ENCODE measurements at regions of chr20 and their contacts with region 1.

Region 1: DNA sequence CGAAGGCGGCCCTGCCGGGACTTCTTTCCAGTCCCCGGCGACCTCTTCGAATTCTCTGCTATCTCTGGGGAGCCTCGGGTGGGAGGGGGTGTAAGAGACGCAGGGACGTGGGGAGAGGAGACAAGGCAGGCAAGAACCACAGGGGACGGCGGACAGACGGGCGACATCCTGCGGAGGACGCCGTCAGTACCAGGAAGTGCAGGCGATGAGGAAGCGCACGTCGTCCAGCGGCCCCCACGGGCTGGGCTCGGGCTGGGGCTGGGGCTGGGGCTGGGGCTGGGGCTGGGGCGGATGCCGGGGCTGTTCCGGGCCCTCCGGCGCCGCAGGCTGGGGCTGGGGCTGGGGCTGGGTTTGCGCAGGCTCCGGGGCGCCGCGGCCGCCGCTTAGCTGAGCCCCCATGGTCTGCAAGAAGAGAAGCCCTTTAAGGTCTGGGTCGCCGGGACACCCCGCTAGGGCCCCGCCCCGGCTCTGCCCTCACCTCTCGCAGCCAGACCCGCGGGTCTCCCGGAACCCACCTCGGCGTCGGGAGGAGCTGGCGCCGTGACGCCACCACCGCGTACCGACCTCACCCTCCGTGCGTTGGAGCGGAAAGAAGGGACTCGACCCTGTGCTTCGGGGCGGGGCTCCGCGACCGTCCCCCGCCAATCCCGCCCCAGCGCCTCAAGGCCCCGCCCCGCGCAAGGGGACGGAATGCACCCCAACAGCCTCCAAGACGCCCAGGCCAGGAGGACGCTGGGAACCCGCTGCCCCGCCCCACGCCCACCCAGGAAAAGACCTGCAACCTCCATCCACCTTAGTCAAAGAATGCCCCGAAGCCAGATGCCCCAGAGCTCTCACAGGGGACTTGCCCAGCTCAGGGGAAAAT is at the start of gene MMP24OS:
- DNase-seq: peak; percentile 94
- ATAC-seq: peak; percentile 96
- H3K4me3 Mint-ChIP-seq: peak within 1 kb of the TSS; percentile 99
- H3K27ac Mint-ChIP-seq: peak within 1 kb of the TSS; percentile 97
- H3K4me1 Mint-ChIP-seq: peaks cover 9% of the 10 kb centered on the region
- H3K27me3 Mint-ChIP-seq: no peaks in the 10 kb centered on the region
- total RNA-seq, gene MMP24OS: 44.6 to 56.8 TPM

Region 2: GRCh38 chr20:34825530-34826362 is 452.0 kb before region 1 on chr20 and contains the start of gene NCOA6:
- CTCF ChIA-PET with region 1: interaction called, 3 read pairs
- POLR2A ChIA-PET with region 1: no interaction called
- intact Hi-C with region 1: loop called in 1 of 2 experiments (anchors 1 kb)
- DNase-seq: peak; percentile 95
- ATAC-seq: peak; percentile 67
- H3K4me3 Mint-ChIP-seq: peak within 1 kb of the TSS; percentile 86
- H3K27ac Mint-ChIP-seq: peak within 1 kb of the TSS; percentile 95
- H3K4me1 Mint-ChIP-seq: peaks cover 30% of the 10 kb centered on the region
- H3K27me3 Mint-ChIP-seq: no peaks in the 10 kb centered on the region
- total RNA-seq, gene NCOA6: 20.3 to 31.1 TPM

Measured in activated CD4-positive, alpha-beta T cell treated with anti-CD3 and anti-CD28 coated beads for 36 hours (primary cell).